BJ (cell line): ENCODE measurements at regions of chr11 and their contacts with region 1.

Region 1: GRCh38 chr11:108235192-108235591 is 12.3 kb downstream of the ATM start:
- DNase-seq: no peak
- H3K4me3 ChIP-seq: no peak overlapping the region
- H3K27me3 ChIP-seq: no peaks in the 10 kb centered on the region
- CTCF ChIP-seq: no peak

Region 2: GRCh38 chr11:108037636-108038035 is 197.6 kb before region 1 on chr11:
- CTCF ChIA-PET with region 1: no interaction called
- POLR2A ChIA-PET with region 1: interaction called, 10 read pairs
- DNase-seq: peak; percentile 32
- H3K4me3 ChIP-seq: no peak overlapping the region
- H3K27me3 ChIP-seq: no peaks in the 10 kb centered on the region
- CTCF ChIP-seq: no peak